ENCODE measurements at regions of chr9 and their contacts with region 1.

Region 1: DNA sequence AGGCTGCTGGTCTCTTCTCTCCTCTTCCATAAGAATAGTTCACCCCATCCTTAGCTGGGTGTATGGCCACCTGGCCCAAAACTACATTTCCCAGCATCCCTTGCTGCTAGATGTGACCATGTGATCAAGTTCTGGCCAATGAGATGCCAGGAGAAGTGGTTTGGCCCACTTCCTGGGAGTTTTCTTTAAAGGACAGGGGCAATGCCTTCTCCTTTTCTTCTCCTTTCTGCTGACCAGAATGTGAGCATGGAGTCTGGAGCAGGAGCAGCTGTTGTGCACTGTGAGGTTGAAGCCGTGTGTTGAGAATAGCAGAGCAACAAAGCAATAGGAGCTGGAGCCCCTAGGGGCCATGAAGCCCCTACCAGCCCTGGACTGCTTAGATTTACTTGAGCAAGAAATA is 36.8 kb downstream of the C9orf50 start:
- DNase-seq: peak; percentile 59 to 67 (median 62)
- H3K4me3 ChIP-seq: no peak overlapping the region
- H3K4me3 Mint-ChIP-seq: peak overlapping the region in 5 of 8 donors; percentile 19 to 70 (median 32)
- H3K27ac ChIP-seq: no peak overlapping the region
- H3K27ac Mint-ChIP-seq: peak overlapping the region; percentile 20 to 92 (median 83)
- H3K4me1 ChIP-seq: peaks cover 52% of the 10 kb centered on the region
- H3K4me1 Mint-ChIP-seq: peaks cover 26 to 77% (median 52%) of the 10 kb centered on the region in 4 donors
- H3K27me3 ChIP-seq: no peaks in the 10 kb centered on the region
- H3K27me3 Mint-ChIP-seq: no peaks in the 10 kb centered on the region

Region 2: GRCh38 chr9:129597355-129598088 is 13.4 kb after region 1 on chr9:
- CTCF ChIA-PET with region 1: interaction called, 4 read pairs
- POLR2A ChIA-PET with region 1: interaction called, 17 read pairs
- intact Hi-C with region 1: no loop called
- DNase-seq: peak in 1 of 5 donors; percentile 60
- H3K4me3 ChIP-seq: peak overlapping the region in 1 of 2 donors; percentile 45
- H3K4me3 Mint-ChIP-seq: peak overlapping the region; percentile 33 to 79 (median 68)
- H3K27ac ChIP-seq: peak overlapping the region; percentile 47
- H3K27ac Mint-ChIP-seq: peak overlapping the region in 5 of 7 donors; percentile 43 to 87 (median 71)
- H3K4me1 ChIP-seq: peaks cover 20% of the 10 kb centered on the region
- H3K4me1 Mint-ChIP-seq: peaks cover 9 to 39% (median 16%) of the 10 kb centered on the region in 4 donors
- H3K27me3 ChIP-seq: peaks cover 6% of the 10 kb centered on the region
- H3K27me3 Mint-ChIP-seq: no peaks in the 10 kb centered on the region

Region 3: GRCh38 chr9:129919841-129920240 is 335.7 kb after region 1 on chr9:
- CTCF ChIA-PET with region 1: no interaction called
- POLR2A ChIA-PET with region 1: no interaction called
- intact Hi-C with region 1: no loop called
- DNase-seq: no peak
- H3K4me3 ChIP-seq: no peak overlapping the region
- H3K4me3 Mint-ChIP-seq: peak overlapping the region in 5 of 8 donors; percentile 50 to 75 (median 68)
- H3K27ac ChIP-seq: no peak overlapping the region
- H3K27ac Mint-ChIP-seq: peak overlapping the region; percentile 20 to 91 (median 66)
- H3K4me1 ChIP-seq: peaks cover 11% of the 10 kb centered on the region
- H3K4me1 Mint-ChIP-seq: peaks cover 22 to 65% (median 29%) of the 10 kb centered on the region in 4 donors
- H3K27me3 ChIP-seq: no peaks in the 10 kb centered on the region
- H3K27me3 Mint-ChIP-seq: no peaks in the 10 kb centered on the region

Measured in CD4-positive, alpha-beta memory T cell (primary cell).